A673 (cell line): ENCODE measurements at regions of chr11 and their contacts with region 1.

Region 1: GRCh38 chr11:31974366-31975136 is 116.3 kb upstream of the RCN1 start:
- DNase-seq: no peak
- H3K4me3 ChIP-seq: no peak overlapping the region
- H3K27ac ChIP-seq: no peak overlapping the region
- H3K4me1 ChIP-seq: no peaks in the 10 kb centered on the region
- H3K27me3 ChIP-seq: peaks cover 86% of the 10 kb centered on the region
- CTCF ChIP-seq: no peak

Region 2: GRCh38 chr11:31005202-31005601 is 969.3 kb before region 1 on chr11:
- CTCF ChIA-PET with region 1: no interaction called
- POLR2A ChIA-PET with region 1: interaction called, 18 read pairs
- intact Hi-C with region 1: no loop called
- DNase-seq: no peak
- H3K4me3 ChIP-seq: no peak overlapping the region
- H3K27ac ChIP-seq: no peak overlapping the region
- H3K4me1 ChIP-seq: no peaks in the 10 kb centered on the region
- H3K27me3 ChIP-seq: peaks cover 26% of the 10 kb centered on the region
- CTCF ChIP-seq: no peak

Region 3: GRCh38 chr11:31499576-31500178 is 474.9 kb before region 1 on chr11:
- CTCF ChIA-PET with region 1: no interaction called
- POLR2A ChIA-PET with region 1: interaction called, 13 read pairs
- intact Hi-C with region 1: no loop called
- DNase-seq: no peak
- H3K4me3 ChIP-seq: no peak overlapping the region
- H3K27ac ChIP-seq: no peak overlapping the region
- H3K4me1 ChIP-seq: peaks cover 13% of the 10 kb centered on the region
- H3K27me3 ChIP-seq: no peaks in the 10 kb centered on the region
- CTCF ChIP-seq: no peak